ENCODE measurements at regions of chr3 and their contacts with region 1.

Region 1: GRCh38 chr3:129927072-129927471 is 33.6 kb upstream of the TMCC1 start:
- DNase-seq: no peak
- ATAC-seq: no peak
- H3K4me3 ChIP-seq: no peak overlapping the region
- H3K4me3 Mint-ChIP-seq: no peak overlapping the region
- H3K27ac ChIP-seq: no peak overlapping the region
- H3K27ac Mint-ChIP-seq: no peak overlapping the region
- H3K4me1 ChIP-seq: no peaks in the 10 kb centered on the region
- H3K4me1 Mint-ChIP-seq: no peaks in the 10 kb centered on the region
- H3K27me3 ChIP-seq: peaks cover 0 to 19% of the 10 kb centered on the region in 2 experiments
- H3K27me3 Mint-ChIP-seq: peaks cover 14 to 18% of the 10 kb centered on the region in 2 donors

Region 2: DNA sequence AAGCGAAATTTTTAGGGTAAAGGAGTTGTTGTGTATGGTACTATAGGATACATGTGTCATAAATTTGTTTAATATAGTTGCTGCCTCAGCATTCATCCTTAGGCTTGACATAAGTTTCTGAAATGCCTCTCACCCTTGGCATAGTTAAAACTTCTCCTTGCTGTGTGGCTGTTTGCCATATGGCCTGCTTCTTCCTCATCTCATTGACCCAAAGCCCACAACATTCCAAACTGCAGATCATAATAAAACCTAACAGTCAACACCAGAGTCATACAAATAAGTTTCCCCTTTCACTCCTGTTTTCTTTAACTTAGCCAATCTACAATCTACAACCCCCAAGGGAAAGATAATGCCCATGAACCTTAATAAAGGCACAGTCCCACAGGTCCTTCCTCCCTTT is 170.2 kb before region 1 on chr3:
- CTCF ChIA-PET with region 1: no interaction called
- POLR2A ChIA-PET with region 1: interaction called in 1 of 2 experiments, 12 read pairs
- DNase-seq: no peak
- ATAC-seq: no peak
- H3K4me3 ChIP-seq: no peak overlapping the region
- H3K4me3 Mint-ChIP-seq: no peak overlapping the region
- H3K27ac ChIP-seq: no peak overlapping the region
- H3K27ac Mint-ChIP-seq: no peak overlapping the region
- H3K4me1 ChIP-seq: no peaks in the 10 kb centered on the region
- H3K4me1 Mint-ChIP-seq: peaks cover 0 to 3% (median 2%) of the 10 kb centered on the region in 3 donors
- H3K27me3 ChIP-seq: no peaks in the 10 kb centered on the region
- H3K27me3 Mint-ChIP-seq: no peaks in the 10 kb centered on the region

Region 3: GRCh38 chr3:129838086-129838485 is 89.0 kb before region 1 on chr3:
- CTCF ChIA-PET with region 1: interaction called in 1 of 2 experiments, 10 read pairs
- POLR2A ChIA-PET with region 1: no interaction called
- DNase-seq: no peak
- ATAC-seq: no peak
- H3K4me3 ChIP-seq: no peak overlapping the region
- H3K4me3 Mint-ChIP-seq: no peak overlapping the region
- H3K27ac ChIP-seq: no peak overlapping the region
- H3K27ac Mint-ChIP-seq: no peak overlapping the region
- H3K4me1 ChIP-seq: no peaks in the 10 kb centered on the region
- H3K4me1 Mint-ChIP-seq: peaks cover 12 to 30% (median 15%) of the 10 kb centered on the region in 3 donors
- H3K27me3 ChIP-seq: no peaks in the 10 kb centered on the region
- H3K27me3 Mint-ChIP-seq: no peaks in the 10 kb centered on the region

Region 4: GRCh38 chr3:129950318-129951046 is 23.4 kb after region 1 on chr3:
- CTCF ChIA-PET with region 1: no interaction called
- POLR2A ChIA-PET with region 1: no interaction called
- DNase-seq: no peak
- ATAC-seq: no peak
- H3K4me3 ChIP-seq: no peak overlapping the region
- H3K4me3 Mint-ChIP-seq: no peak overlapping the region
- H3K27ac ChIP-seq: no peak overlapping the region
- H3K27ac Mint-ChIP-seq: no peak overlapping the region
- H3K4me1 ChIP-seq: no peaks in the 10 kb centered on the region
- H3K4me1 Mint-ChIP-seq: no peaks in the 10 kb centered on the region
- H3K27me3 ChIP-seq: peaks cover 0 to 7% of the 10 kb centered on the region in 2 experiments
- H3K27me3 Mint-ChIP-seq: peaks cover 12 to 14% of the 10 kb centered on the region in 2 donors